ENCODE measurements at regions of chr4 and their contacts with region 1.

Region 1: DNA sequence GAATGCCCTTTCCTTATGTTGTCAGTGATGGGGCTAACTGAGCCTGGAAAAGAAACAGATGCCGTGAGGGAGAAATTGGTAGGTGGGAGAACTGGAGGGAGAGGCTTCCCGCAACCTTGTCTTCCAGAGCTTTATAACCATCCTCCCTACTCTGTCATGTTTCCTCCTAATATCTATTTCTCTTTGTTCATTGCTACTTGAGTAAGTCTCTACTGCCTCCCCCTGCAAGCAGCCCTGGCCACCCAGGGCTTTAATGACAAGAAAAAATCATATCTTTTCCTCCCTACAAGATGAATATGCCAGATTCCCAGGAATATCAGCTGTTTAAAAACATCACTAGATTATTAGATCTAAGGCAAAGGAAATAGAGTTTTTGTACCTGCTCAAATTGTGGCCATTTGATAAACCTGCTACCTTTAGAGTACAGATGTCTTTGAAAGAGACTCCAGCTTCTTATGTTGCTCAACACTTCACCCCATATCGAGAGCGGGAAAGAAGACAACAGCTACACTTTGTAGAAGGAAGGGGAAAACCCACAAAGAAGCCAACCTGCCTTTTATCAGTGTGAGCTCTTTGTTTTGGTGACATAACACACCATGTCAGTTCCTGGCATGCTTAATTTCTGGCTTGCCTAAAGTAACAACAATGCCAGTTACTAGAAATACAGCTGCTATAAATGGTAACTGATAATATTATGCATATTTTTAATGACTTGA is 186.6 kb upstream of the LEF1 start:
- DNase-seq: peak; percentile 24
- H3K4me3 Mint-ChIP-seq: no peak overlapping the region
- H3K27ac Mint-ChIP-seq: peak overlapping the region; percentile 55
- H3K4me1 Mint-ChIP-seq: peaks cover 52% of the 10 kb centered on the region
- H3K27me3 Mint-ChIP-seq: no peaks in the 10 kb centered on the region

Region 2: DNA sequence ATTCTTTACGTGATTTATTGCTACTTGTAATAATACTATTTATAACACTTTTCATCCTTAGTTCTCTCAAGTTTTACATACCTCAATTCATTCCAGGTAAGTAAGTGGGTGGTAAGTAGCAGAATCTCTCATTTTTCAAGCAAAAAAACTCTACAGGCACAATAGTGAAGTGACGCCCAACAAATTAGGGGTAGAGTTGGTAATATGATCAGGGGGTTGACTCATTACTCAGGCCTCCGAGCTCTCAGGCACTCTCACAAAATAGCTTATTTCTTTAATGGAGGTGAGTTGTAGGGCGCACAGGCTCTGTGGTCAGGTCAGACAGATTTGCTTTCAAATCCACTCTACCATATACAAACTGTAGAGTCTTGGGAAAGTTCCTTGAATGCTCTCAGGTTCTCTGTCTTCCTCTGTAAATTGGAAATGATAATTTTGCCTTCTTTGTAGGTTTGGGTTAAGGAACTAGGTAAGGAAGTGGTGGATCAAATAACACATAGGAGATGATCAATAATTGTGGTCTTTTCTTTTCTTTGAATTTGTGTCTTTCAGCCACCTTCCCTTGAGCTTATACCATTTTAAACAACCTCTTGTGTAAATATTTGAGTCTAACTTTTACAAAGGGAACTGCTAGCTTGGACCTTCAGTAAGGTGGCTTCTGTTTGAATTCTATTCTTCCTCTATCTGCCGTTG is 51.7 kb before region 1 on chr4:
- CTCF ChIA-PET with region 1: no interaction called
- POLR2A ChIA-PET with region 1: no interaction called
- intact Hi-C with region 1: no loop called
- DNase-seq: no peak
- H3K4me3 Mint-ChIP-seq: no peak overlapping the region
- H3K27ac Mint-ChIP-seq: no peak overlapping the region
- H3K4me1 Mint-ChIP-seq: peaks cover 7% of the 10 kb centered on the region
- H3K27me3 Mint-ChIP-seq: no peaks in the 10 kb centered on the region

Region 3: DNA sequence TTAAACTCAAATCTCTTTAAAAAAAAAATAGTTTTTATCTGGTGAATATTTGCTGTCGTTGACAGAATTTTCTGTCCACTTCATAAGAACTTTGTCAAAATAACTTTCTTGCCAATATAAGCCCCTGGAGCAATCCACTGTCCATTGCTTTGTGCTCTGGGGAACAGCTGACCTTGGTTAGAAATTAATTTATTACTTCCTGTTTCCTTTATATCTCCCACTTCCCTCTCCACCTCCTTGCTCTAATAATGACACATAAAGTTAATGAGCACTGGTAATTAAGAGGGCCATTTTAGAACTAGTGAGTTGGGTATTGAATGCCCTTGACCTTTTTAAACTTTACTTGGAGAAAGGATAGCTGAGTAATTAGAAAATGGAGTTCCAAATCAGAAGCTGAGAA is 35.3 kb before region 1 on chr4:
- CTCF ChIA-PET with region 1: no interaction called
- POLR2A ChIA-PET with region 1: no interaction called
- intact Hi-C with region 1: no loop called
- DNase-seq: no peak
- H3K4me3 Mint-ChIP-seq: no peak overlapping the region
- H3K27ac Mint-ChIP-seq: no peak overlapping the region
- H3K4me1 Mint-ChIP-seq: peaks cover 5% of the 10 kb centered on the region
- H3K27me3 Mint-ChIP-seq: no peaks in the 10 kb centered on the region

Region 4: GRCh38 chr4:108342325-108342970 is 12.9 kb before region 1 on chr4:
- CTCF ChIA-PET with region 1: no interaction called
- POLR2A ChIA-PET with region 1: interaction called, 3 read pairs
- intact Hi-C with region 1: loop called (anchors 2 kb)
- DNase-seq: peak; percentile 37
- H3K4me3 Mint-ChIP-seq: peak overlapping the region; percentile 24
- H3K27ac Mint-ChIP-seq: peak overlapping the region; percentile 72
- H3K4me1 Mint-ChIP-seq: peaks cover 33% of the 10 kb centered on the region
- H3K27me3 Mint-ChIP-seq: no peaks in the 10 kb centered on the region

Region 5: DNA sequence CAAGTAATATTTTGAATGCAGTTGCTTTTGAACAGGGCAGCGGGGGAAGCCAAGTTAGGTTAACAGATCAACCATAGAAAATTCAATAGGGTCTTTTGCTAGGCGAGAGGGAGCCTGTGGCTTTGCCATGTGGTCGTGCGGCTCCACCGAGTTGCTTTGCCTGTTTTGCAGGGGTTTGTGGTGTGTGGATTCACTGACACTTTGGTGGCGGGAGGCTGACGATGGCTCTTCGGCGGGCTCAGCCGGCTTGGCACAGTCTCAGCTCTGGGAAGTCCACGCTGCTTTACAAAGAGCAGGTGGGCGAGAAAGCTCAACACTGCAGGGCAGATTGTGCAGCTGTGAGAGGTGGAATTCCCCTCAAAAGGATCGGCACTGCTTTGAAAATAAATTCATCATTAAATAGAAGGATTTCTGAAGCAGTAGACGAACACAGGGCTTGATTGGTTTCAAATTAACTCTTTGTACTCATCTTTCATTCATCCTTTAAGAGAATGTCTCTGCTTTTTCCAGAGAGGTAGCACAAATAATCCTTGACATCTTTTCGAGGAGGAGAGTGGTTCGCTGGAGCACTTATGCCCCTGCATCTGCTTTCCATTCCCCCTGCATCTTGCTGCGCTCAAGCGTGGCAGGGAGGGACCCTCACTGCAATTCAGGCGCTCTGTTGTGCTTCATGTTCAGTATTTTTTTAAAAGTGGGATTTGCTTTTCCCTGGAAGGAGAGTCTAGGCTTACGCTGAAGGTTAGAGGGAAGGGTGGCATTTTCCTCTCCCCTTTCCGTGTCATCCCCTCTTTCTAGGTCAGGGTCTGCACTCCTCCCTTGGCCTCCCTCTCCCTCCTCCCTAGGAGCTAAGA is 15.2 kb after region 1 on chr4:
- CTCF ChIA-PET with region 1: no interaction called
- POLR2A ChIA-PET with region 1: no interaction called
- intact Hi-C with region 1: no loop called
- DNase-seq: no peak
- H3K4me3 Mint-ChIP-seq: no peak overlapping the region
- H3K27ac Mint-ChIP-seq: no peak overlapping the region
- H3K4me1 Mint-ChIP-seq: peaks cover 13% of the 10 kb centered on the region
- H3K27me3 Mint-ChIP-seq: no peaks in the 10 kb centered on the region

Region 6: DNA sequence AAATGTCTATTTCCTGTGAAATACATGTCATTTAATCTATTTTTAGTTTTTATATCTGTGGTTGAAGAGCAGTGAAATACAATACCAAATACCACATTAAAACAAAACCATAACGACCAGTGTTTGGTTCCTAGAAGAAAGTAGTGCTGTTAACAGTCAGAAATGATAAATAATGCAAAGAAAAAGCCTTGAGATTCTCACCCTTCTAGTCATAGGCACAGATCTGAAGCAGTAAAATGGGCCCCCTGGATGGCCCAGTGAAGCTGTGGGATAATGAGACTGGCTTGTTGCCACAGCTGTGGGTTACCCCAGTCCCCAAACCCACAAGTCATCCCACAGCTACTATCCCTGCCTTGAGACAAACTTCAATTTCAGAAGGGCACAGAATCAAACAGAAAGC is 127.7 kb after region 1 on chr4:
- CTCF ChIA-PET with region 1: no interaction called
- POLR2A ChIA-PET with region 1: no interaction called
- intact Hi-C with region 1: loop called (anchors 5 kb)
- DNase-seq: peak; percentile 64
- H3K4me3 Mint-ChIP-seq: peak overlapping the region; percentile 17
- H3K27ac Mint-ChIP-seq: no peak overlapping the region
- H3K4me1 Mint-ChIP-seq: peaks cover 27% of the 10 kb centered on the region
- H3K27me3 Mint-ChIP-seq: no peaks in the 10 kb centered on the region